H1 (cell line): ENCODE measurements at regions of chr10 and their contacts with region 1.

Region 1: GRCh38 chr10:119199231-119199992 is 8.0 kb upstream of the GRK5 start:
- DNase-seq: peak in 1 of 2 experiments; percentile 59
- H3K4me3 ChIP-seq: no peak overlapping the region
- H3K27ac ChIP-seq: no peak overlapping the region
- H3K4me1 ChIP-seq: peaks cover 0 to 3% (median 0%) of the 10 kb centered on the region in 4 experiments; a peak in 1 of 7 replicates
- H3K27me3 ChIP-seq: no peaks in the 10 kb centered on the region
- CTCF ChIP-seq: peak; percentile 75 to 91 (median 87)
- EP300 ChIP-seq: no peak
- POLR2A ChIP-seq: no peak
- RAD21 ChIP-seq: peak; percentile 94 to 95

Region 2: GRCh38 chr10:118990326-118990725 is 209.1 kb before region 1 on chr10:
- CTCF ChIA-PET with region 1: no interaction called
- POLR2A ChIA-PET with region 1: no interaction called
- DNase-seq: no peak
- H3K4me3 ChIP-seq: no peak overlapping the region
- H3K27ac ChIP-seq: no peak overlapping the region
- H3K4me1 ChIP-seq: no peaks in the 10 kb centered on the region
- H3K27me3 ChIP-seq: no peaks in the 10 kb centered on the region
- CTCF ChIP-seq: no peak
- EP300 ChIP-seq: no peak
- POLR2A ChIP-seq: no peak
- RAD21 ChIP-seq: no peak

Region 3: DNA sequence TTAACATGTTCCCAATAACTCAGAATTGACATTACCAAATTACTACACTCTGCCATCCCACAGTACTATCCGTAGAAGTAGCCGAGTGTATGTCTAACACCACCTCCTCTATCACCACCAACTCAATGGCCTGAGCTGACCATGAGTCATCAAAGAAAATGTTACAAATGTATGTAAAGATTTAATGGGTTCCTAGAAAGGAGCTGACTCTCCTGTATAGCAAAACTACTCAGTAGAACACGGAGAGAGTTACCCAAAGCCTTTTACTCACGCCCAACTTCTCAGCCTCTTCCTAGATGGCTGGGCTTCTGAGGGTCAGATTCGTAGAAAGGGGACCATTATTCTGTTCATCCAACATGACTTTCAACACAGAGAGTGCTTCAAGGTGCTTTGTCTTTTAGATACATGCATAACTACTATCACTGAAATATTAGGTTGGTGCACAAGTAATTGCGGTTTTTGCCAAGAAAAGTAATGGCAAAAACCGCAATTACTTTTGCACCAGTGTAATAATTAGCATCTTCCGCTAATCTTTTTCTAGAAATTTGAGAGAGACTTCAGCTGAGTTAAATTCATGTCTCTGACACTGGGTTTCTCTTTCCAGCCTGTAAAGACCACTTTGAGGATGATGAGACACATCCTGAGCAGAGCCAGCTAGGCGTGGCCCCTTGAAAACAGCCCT is 193.9 kb before region 1 on chr10:
- CTCF ChIA-PET with region 1: no interaction called
- POLR2A ChIA-PET with region 1: no interaction called
- DNase-seq: no peak
- H3K4me3 ChIP-seq: no peak overlapping the region
- H3K27ac ChIP-seq: no peak overlapping the region
- H3K4me1 ChIP-seq: no peaks in the 10 kb centered on the region; a peak in 1 of 7 replicates
- H3K27me3 ChIP-seq: no peaks in the 10 kb centered on the region
- CTCF ChIP-seq: no peak
- EP300 ChIP-seq: no peak
- POLR2A ChIP-seq: no peak
- RAD21 ChIP-seq: no peak

Region 4: GRCh38 chr10:119139464-119140067 is 59.8 kb before region 1 on chr10:
- CTCF ChIA-PET with region 1: interaction called, 16 read pairs
- POLR2A ChIA-PET with region 1: interaction called, 6 read pairs
- DNase-seq: peak; percentile 19 to 68
- H3K4me3 ChIP-seq: no peak overlapping the region
- H3K27ac ChIP-seq: no peak overlapping the region
- H3K4me1 ChIP-seq: no peaks in the 10 kb centered on the region
- H3K27me3 ChIP-seq: no peaks in the 10 kb centered on the region
- CTCF ChIP-seq: peak; percentile 66 to 96 (median 81)
- EP300 ChIP-seq: no peak
- POLR2A ChIP-seq: no peak
- RAD21 ChIP-seq: peak; percentile 80 to 81

Region 5: GRCh38 chr10:119178372-119179119 is 20.9 kb before region 1 on chr10 and contains the start of gene PRDX3:
- CTCF ChIA-PET with region 1: interaction called, 13 read pairs
- POLR2A ChIA-PET with region 1: no interaction called
- DNase-seq: peak; percentile 64 to 96
- H3K4me3 ChIP-seq: peak within 1 kb of the TSS; percentile 86 to 99 (median 92)
- H3K27ac ChIP-seq: peak within 1 kb of the TSS; percentile 91
- H3K4me1 ChIP-seq: peaks cover 0 to 3% (median 2%) of the 10 kb centered on the region in 4 experiments; a peak in 4 of 7 replicates
- H3K27me3 ChIP-seq: no peaks in the 10 kb centered on the region
- CTCF ChIP-seq: no peak
- EP300 ChIP-seq: no peak
- POLR2A ChIP-seq: peak; percentile 92 to 95
- RAD21 ChIP-seq: no peak
- total RNA-seq, gene PRDX3: 194 and 208 TPM in 2 replicates

Region 6: GRCh38 chr10:119233821-119234220 is 34.4 kb after region 1 on chr10:
- CTCF ChIA-PET with region 1: interaction called, 10 read pairs
- POLR2A ChIA-PET with region 1: no interaction called
- DNase-seq: no peak
- H3K4me3 ChIP-seq: no peak overlapping the region
- H3K27ac ChIP-seq: no peak overlapping the region
- H3K4me1 ChIP-seq: peaks cover 0 to 10% (median 3%) of the 10 kb centered on the region in 4 experiments; a peak in 3 of 7 replicates
- H3K27me3 ChIP-seq: no peaks in the 10 kb centered on the region
- CTCF ChIP-seq: no peak
- EP300 ChIP-seq: no peak
- POLR2A ChIP-seq: no peak
- RAD21 ChIP-seq: no peak

Region 7: DNA sequence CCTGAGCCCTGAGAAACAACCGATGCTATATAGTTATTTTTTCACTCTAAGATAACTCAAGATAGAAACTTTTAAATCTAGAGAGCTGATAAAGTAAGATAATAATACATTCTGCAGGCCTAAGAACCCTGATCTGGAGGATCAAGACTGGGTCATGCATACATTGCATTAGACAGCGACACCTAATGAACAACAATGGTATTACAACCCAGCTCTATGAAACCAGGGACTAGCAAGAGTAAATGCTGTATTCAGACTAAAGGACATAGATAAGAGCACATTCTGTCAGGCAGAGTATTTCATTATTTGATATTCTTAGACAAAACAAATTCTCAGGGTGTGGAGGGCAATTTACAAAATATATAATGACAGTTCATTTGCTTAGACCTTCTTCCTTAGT is 156.5 kb after region 1 on chr10:
- CTCF ChIA-PET with region 1: interaction called, 13 read pairs
- POLR2A ChIA-PET with region 1: no interaction called
- DNase-seq: no peak
- H3K4me3 ChIP-seq: no peak overlapping the region
- H3K27ac ChIP-seq: no peak overlapping the region
- H3K4me1 ChIP-seq: no peaks in the 10 kb centered on the region
- H3K27me3 ChIP-seq: no peaks in the 10 kb centered on the region
- CTCF ChIP-seq: peak in 2 of 3 experiments; percentile 10 to 41; a peak in 2 of 4 replicates
- EP300 ChIP-seq: no peak
- POLR2A ChIP-seq: no peak
- RAD21 ChIP-seq: peak; percentile 13 to 37; a peak in 2 of 4 replicates

Region 8: DNA sequence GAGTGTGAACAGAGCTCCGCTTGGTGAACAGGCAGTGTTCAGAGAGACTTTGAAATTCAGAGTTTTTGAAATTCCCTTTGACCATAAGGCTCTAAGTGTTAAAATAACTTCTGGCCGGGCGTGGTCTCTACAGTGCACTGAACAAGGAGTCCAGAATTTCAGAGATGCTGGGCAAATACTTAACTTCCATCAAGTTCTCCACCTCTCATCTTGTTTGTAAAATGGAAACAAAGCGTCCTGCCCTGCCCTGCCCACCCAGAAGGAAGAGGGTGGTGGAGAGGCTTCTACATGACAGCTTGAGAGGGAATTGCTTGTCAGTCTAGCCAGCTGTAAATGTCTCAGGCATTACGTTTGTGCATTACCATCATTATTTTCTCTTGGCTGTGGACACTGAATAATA is 240.5 kb after region 1 on chr10:
- CTCF ChIA-PET with region 1: interaction called, 57 read pairs
- POLR2A ChIA-PET with region 1: no interaction called
- DNase-seq: no peak
- H3K4me3 ChIP-seq: no peak overlapping the region
- H3K27ac ChIP-seq: no peak overlapping the region
- H3K4me1 ChIP-seq: no peaks in the 10 kb centered on the region; a peak in 1 of 7 replicates
- H3K27me3 ChIP-seq: no peaks in the 10 kb centered on the region
- CTCF ChIP-seq: no peak
- EP300 ChIP-seq: no peak
- POLR2A ChIP-seq: no peak
- RAD21 ChIP-seq: no peak

Region 9: GRCh38 chr10:119478111-119478802 is 278.8 kb after region 1 on chr10:
- CTCF ChIA-PET with region 1: interaction called, 20 read pairs
- POLR2A ChIA-PET with region 1: no interaction called
- DNase-seq: no peak
- H3K4me3 ChIP-seq: no peak overlapping the region
- H3K27ac ChIP-seq: no peak overlapping the region
- H3K4me1 ChIP-seq: peaks cover 0 to 8% (median 2%) of the 10 kb centered on the region in 4 experiments; a peak in 3 of 7 replicates
- H3K27me3 ChIP-seq: peaks cover 48 to 89% (median 74%) of the 10 kb centered on the region in 4 experiments
- CTCF ChIP-seq: no peak
- EP300 ChIP-seq: no peak
- POLR2A ChIP-seq: no peak
- RAD21 ChIP-seq: no peak